ENCODE measurements at regions of chr5 and their contacts with region 1.

Region 1: GRCh38 chr5:157820593-157821252 is 38.2 kb downstream of the CLINT1 start:
- DNase-seq: peak; percentile 45
- ATAC-seq: no peak
- H3K4me3 Mint-ChIP-seq: no peak overlapping the region
- H3K27ac Mint-ChIP-seq: no peak overlapping the region
- H3K4me1 Mint-ChIP-seq: peaks cover 39% of the 10 kb centered on the region
- H3K27me3 Mint-ChIP-seq: no peaks in the 10 kb centered on the region
- CTCF ChIP-seq: peak; percentile 55

Region 2: DNA sequence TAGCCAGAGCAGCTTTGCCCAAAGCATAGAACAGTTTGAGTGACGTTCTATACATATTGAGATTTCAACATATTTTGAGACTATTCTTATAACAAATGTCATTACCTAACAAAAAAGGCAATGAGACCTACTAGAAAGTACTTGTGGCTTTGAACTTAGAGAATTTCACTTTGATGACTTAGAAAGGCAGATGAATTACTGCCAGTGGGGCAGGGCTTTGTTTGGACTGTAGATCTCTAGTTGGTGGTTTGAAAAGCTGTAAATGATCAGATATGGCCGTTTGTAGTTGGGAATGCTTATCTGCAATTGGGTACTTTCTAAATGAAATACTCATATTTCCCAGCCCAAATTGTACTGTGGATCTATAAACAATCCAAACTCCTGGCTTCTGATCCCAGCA is 196.6 kb before region 1 on chr5:
- CTCF ChIA-PET with region 1: no interaction called
- POLR2A ChIA-PET with region 1: no interaction called
- intact Hi-C with region 1: no loop called
- DNase-seq: no peak
- ATAC-seq: no peak
- H3K4me3 Mint-ChIP-seq: no peak overlapping the region
- H3K27ac Mint-ChIP-seq: no peak overlapping the region
- H3K4me1 Mint-ChIP-seq: no peaks in the 10 kb centered on the region
- H3K27me3 Mint-ChIP-seq: peaks cover 4% of the 10 kb centered on the region
- CTCF ChIP-seq: no peak

Region 3: GRCh38 chr5:157748760-157749461 is 71.8 kb before region 1 on chr5:
- CTCF ChIA-PET with region 1: no interaction called
- POLR2A ChIA-PET with region 1: no interaction called
- intact Hi-C with region 1: no loop called
- DNase-seq: no peak
- ATAC-seq: no peak
- H3K4me3 Mint-ChIP-seq: no peak overlapping the region
- H3K27ac Mint-ChIP-seq: no peak overlapping the region
- H3K4me1 Mint-ChIP-seq: peaks cover 48% of the 10 kb centered on the region
- H3K27me3 Mint-ChIP-seq: no peaks in the 10 kb centered on the region
- CTCF ChIP-seq: no peak

Region 4: DNA sequence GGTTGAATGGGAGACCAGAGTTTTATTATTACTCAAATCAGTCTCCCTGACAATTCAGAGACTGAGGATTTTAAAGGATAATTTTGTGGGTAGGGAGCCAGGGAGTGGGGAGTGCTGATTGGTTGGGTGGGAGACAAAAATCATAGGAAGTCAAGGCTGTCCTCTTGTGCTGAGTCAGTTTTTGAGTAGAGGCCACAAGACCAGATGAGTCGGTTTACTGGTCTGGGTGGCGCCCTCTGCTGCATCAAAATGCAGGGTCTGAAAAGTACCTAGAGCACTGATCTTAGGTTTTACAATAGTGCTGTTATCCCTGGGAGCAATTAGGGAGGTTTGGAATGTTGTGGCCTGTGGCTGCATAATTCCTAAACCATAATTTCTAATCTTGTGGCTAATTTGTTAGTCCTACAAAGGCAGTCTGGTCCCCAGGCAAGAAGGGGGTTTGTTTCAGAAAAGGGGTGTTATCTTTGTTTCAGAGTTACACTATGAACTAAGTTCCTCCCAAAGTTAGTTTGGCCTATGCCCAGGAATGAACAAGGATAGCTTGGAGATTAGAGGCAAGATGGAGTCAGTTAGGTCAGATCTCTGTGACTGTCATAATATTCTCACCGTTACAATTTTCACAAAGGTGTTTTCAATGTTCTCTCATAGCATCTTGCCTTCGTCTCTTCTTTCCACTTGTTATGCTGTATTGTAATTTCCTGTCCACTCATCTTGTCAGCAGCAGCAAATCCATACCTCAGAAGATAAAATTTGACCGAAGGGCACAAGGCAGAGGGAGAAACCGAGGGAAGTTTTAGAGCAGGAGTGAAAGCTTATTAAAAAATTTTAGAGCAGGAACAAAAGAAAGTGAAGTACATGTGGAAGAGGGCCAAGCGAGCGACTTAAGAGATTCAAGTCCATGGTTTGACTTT is 97.4 kb after region 1 on chr5:
- CTCF ChIA-PET with region 1: interaction called, 24 read pairs
- POLR2A ChIA-PET with region 1: no interaction called
- intact Hi-C with region 1: loop called (anchors 5 kb)
- DNase-seq: peak; percentile 87
- ATAC-seq: peak; percentile 75
- H3K4me3 Mint-ChIP-seq: no peak overlapping the region
- H3K27ac Mint-ChIP-seq: no peak overlapping the region
- H3K4me1 Mint-ChIP-seq: peaks cover 26% of the 10 kb centered on the region
- H3K27me3 Mint-ChIP-seq: no peaks in the 10 kb centered on the region
- CTCF ChIP-seq: peak; percentile 74

Region 5: DNA sequence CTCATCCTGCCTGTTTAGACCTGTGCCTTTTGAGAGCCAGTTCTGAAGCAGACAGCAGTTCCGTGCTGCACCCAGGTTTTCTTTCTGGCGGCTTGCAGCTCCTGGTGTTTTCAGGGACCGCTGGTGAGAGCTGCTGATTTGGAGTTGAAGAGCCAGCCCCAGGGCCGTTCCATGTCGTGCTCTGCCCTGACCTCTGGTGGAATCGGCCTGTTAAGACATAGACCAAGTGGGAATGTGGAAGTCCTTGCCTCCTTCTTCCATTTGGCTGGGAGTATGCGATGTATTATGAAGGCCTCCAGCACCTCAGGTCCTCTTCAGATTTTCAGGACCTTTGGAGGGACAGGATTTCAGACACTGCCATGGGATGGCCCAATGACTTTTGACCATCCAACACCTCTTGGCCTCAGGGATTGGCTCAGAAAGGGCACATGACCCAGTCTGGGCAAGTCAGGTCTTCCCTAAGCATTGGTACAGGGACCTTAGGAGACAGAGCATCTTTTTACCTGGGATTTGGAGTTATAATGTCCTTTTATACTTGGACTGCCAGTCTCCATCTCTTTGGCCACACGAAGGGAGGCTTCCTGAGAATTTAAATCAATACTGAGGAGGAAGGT is 174.3 kb after region 1 on chr5:
- CTCF ChIA-PET with region 1: interaction called, 20 read pairs
- POLR2A ChIA-PET with region 1: no interaction called
- intact Hi-C with region 1: loop called (anchors 5 kb)
- DNase-seq: peak; percentile 58
- ATAC-seq: peak; percentile 91
- H3K4me3 Mint-ChIP-seq: no peak overlapping the region
- H3K27ac Mint-ChIP-seq: no peak overlapping the region
- H3K4me1 Mint-ChIP-seq: peaks cover 12% of the 10 kb centered on the region
- H3K27me3 Mint-ChIP-seq: peaks cover 19% of the 10 kb centered on the region
- CTCF ChIP-seq: peak; percentile 65

Measured in activated CD8-positive, alpha-beta T cell treated with anti-CD3 and anti-CD28 coated beads for 36 hours (primary cell).